H1 (cell line): ENCODE measurements at regions of chr10 and their contacts with region 1.

Region 1: DNA sequence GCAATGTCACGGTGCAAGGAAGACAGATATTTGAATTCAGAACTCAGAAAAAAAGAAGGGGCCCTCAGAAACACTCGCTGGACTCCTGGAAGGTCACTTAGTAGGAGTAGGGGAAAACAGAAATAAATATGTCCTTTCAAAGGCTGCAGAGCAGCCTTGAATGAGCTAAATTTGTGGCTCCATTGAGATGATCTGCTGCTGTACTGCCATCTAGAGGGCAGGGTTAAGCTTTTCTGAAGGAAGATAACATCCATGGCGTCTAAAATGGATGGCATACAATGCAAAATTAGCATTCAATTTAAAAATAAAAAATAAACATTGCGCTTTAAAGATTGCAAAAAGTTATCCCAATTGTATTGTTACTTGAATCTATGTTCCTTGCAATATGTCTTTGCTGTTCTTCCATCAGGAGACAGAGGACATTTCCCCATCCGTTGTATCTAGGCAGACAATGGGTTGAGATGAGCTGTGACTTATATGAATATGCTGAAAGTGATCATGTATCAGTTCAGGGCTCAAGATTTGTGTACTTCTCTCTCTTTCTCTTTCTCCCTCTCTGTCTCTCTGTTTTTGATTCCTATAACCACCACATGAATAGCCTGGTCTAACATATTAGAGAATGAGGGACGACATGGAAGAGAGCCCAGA is 642.2 kb downstream of the SH2D4B start:
- DNase-seq: no peak
- H3K4me3 ChIP-seq: no peak overlapping the region
- H3K27ac ChIP-seq: no peak overlapping the region
- H3K4me1 ChIP-seq: no peaks in the 10 kb centered on the region
- H3K27me3 ChIP-seq: no peaks in the 10 kb centered on the region
- CTCF ChIP-seq: peak in 2 of 3 experiments; percentile 53 to 69; a peak in 3 of 4 replicates
- EP300 ChIP-seq: no peak
- POLR2A ChIP-seq: no peak
- RAD21 ChIP-seq: peak; percentile 64 to 75

Region 2: GRCh38 chr10:81081887-81082620 is 97.9 kb before region 1 on chr10:
- CTCF ChIA-PET with region 1: interaction called, 17 read pairs
- POLR2A ChIA-PET with region 1: no interaction called
- DNase-seq: peak in 1 of 2 experiments; percentile 48
- H3K4me3 ChIP-seq: no peak overlapping the region
- H3K27ac ChIP-seq: no peak overlapping the region
- H3K4me1 ChIP-seq: peaks cover 0 to 3% (median 0%) of the 10 kb centered on the region in 4 experiments; a peak in 1 of 7 replicates
- H3K27me3 ChIP-seq: no peaks in the 10 kb centered on the region
- CTCF ChIP-seq: peak in 2 of 3 experiments; percentile 60 to 76; a peak in 2 of 4 replicates
- EP300 ChIP-seq: no peak
- POLR2A ChIP-seq: no peak
- RAD21 ChIP-seq: peak; percentile 87 to 94

Region 3: DNA sequence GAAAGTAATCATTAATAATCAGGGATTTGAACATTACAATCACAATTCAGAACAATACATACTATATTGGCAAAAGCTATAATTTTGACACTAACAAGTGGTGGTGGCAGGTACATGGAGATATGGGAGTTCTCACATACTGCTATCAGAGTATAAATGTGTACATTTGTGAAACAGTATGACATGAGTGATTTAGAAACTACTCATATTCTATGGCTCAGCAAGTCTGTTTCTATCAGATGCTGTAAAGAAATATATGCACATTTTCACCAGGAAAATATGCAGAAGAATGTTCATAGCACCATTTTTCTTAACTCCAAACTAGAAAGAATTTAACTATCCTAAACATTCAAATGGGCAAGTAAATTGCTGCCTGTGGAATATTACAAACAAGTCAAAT is 22.2 kb before region 1 on chr10:
- CTCF ChIA-PET with region 1: interaction called, 15 read pairs
- POLR2A ChIA-PET with region 1: no interaction called
- DNase-seq: no peak
- H3K4me3 ChIP-seq: no peak overlapping the region
- H3K27ac ChIP-seq: no peak overlapping the region
- H3K4me1 ChIP-seq: no peaks in the 10 kb centered on the region
- H3K27me3 ChIP-seq: no peaks in the 10 kb centered on the region
- CTCF ChIP-seq: no peak
- EP300 ChIP-seq: no peak
- POLR2A ChIP-seq: no peak
- RAD21 ChIP-seq: no peak

Region 4: DNA sequence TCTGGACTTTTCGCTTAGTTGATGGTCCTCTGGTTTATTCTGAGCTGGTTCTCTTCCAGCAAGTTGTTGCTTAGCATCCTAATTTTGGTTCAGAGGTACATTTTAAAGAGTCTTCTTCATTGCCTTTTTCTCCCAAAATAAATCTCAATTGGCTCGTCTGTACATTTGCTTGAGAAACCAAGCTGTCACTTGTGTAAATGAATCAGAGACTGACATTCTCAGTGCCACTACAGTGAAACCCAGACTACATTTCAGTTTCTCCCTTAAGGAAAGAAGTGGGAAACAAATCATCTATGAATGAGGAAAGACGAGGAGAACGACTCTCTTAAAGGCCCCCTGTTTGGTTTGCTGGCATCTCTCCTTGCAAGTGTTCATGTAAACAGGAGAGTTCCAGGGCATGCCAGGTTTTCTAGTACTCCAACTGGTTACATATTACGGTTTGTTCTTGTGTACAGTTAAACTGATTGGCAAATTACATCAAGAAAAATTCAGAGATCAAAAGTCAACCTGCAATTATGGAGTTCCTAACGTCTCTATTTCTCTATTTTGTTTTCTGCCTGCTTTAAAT is 12.4 kb after region 1 on chr10:
- CTCF ChIA-PET with region 1: interaction called, 10 read pairs
- POLR2A ChIA-PET with region 1: no interaction called
- DNase-seq: no peak
- H3K4me3 ChIP-seq: no peak overlapping the region
- H3K27ac ChIP-seq: no peak overlapping the region
- H3K4me1 ChIP-seq: no peaks in the 10 kb centered on the region
- H3K27me3 ChIP-seq: no peaks in the 10 kb centered on the region
- CTCF ChIP-seq: no peak
- EP300 ChIP-seq: no peak
- POLR2A ChIP-seq: no peak
- RAD21 ChIP-seq: no peak